Naive thymus-derived CD4-positive, alpha-beta T cell (primary cell): ENCODE measurements at regions of chr2 and their contacts with region 1.

Region 1: DNA sequence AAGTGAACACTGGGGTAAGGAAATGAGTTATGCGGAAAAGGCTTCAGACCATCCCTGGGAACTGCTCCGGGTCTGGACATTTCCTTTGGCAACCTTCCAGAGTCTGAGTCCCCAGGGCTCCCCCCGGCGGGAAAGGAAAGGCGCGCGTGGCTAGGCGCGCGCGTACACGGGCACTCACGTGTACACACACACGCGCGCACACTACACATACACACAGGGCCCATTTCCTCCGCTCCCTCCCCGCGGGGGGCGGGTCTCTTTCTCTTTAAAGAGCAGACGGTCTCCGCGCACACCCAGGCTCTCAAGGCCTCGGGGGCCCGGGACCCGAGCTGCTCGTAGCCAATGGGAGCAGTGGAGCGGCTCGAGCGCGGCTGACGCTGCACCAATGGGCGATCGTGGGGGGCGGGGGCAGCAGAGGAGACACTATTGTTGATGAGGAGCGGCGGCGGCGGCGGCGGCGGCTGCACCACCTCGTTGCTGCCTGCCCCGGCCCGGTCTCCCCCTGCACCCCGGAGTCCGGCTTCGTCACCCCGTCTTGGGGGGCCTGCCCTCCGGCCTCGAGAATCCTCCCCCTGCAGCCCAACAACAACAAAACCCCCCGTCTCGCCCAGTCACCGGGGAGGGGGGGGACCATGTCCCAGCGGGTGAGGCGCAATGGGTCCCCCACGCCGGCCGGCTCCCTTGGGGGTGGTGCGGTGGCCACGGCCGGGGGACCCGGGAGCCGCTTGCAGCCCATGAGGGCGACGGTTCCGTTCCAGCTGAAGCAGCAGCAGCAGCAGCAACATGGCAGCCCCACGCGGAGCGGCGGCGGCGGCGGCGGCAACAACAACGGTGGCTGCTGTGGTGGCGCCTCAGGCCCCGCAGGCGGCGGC is at the start of gene FAM117B:
- DNase-seq: peak; percentile 90 to 99 (median 98)
- ATAC-seq: peak; percentile 93
- H3K4me3 ChIP-seq: peak within 1 kb of the TSS; percentile 81
- H3K4me3 Mint-ChIP-seq: peak within 1 kb of the TSS in 9 of 10 donors; percentile 93 to 98 (median 97)
- H3K27ac ChIP-seq: peak within 1 kb of the TSS; percentile 81
- H3K27ac Mint-ChIP-seq: peak within 1 kb of the TSS; percentile 92 to 99 (median 96)
- H3K4me1 ChIP-seq: peaks cover 22 to 29% of the 10 kb centered on the region in 2 donors
- H3K4me1 Mint-ChIP-seq: peaks cover 27 to 66% (median 61%) of the 10 kb centered on the region in 7 donors
- H3K27me3 ChIP-seq: no peaks in the 10 kb centered on the region
- H3K27me3 Mint-ChIP-seq: no peaks in the 10 kb centered on the region
- total RNA-seq, gene FAM117B: 12.8 to 57.9 (median 48.8) TPM

Region 2: DNA sequence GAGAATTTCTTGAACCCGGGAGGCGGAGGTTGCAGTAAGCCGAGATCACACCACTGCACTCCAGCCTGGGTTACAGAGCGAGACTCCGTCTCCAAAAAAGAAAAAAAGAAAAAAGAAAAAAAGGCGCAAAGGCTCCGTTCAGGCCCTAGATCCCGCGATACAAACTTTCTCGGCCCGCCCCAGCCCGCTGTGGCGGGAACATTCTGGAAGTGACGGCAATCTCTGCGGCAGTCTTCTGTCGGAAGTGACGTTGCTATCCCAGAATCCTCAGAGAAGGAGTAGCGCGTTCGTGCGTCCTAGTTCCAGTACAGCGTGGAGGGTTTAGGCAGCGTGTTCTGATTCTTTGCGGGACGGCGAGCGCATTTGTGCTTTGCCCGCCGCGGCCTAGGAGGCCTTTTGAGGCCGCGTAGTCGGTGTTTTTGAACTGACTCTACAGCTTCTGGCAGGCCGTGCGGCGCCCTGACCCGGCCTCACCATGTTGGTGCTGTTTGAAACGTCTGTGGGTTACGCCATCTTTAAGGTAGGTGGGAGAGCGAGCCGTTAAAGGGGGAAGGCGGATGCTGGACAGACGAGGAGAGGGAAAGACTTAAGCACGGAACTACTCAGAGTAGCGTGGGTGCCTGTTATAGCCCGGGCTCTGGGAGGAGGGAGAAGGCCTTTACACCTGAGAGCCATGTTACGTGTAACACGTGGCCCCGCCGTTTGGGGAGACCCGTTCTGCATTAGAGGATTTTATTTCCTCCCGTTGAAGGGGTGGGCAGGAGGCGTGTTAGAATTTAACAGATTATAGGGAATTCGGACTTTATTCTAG is 369.1 kb before region 1 on chr2 and contains the start of gene NOP58:
- CTCF ChIA-PET with region 1: no interaction called
- POLR2A ChIA-PET with region 1: interaction called, 3 read pairs
- intact Hi-C with region 1: loop called in 1 of 2 experiments (anchors 1 kb)
- DNase-seq: peak; percentile 69 to 96 (median 93)
- ATAC-seq: peak; percentile 90
- H3K4me3 ChIP-seq: peak within 1 kb of the TSS; percentile 93
- H3K4me3 Mint-ChIP-seq: peak within 1 kb of the TSS in 9 of 10 donors; percentile 53 to 71 (median 64)
- H3K27ac ChIP-seq: peak within 1 kb of the TSS; percentile 92
- H3K27ac Mint-ChIP-seq: peak within 1 kb of the TSS in 6 of 9 donors; percentile 4 to 83 (median 76)
- H3K4me1 ChIP-seq: peaks cover 17 to 34% of the 10 kb centered on the region in 2 donors
- H3K4me1 Mint-ChIP-seq: peaks cover 11 to 27% (median 21%) of the 10 kb centered on the region in 7 donors
- H3K27me3 ChIP-seq: no peaks in the 10 kb centered on the region
- H3K27me3 Mint-ChIP-seq: no peaks in the 10 kb centered on the region
- total RNA-seq, gene NOP58: 105 to 259 (median 110) TPM

Region 3: DNA sequence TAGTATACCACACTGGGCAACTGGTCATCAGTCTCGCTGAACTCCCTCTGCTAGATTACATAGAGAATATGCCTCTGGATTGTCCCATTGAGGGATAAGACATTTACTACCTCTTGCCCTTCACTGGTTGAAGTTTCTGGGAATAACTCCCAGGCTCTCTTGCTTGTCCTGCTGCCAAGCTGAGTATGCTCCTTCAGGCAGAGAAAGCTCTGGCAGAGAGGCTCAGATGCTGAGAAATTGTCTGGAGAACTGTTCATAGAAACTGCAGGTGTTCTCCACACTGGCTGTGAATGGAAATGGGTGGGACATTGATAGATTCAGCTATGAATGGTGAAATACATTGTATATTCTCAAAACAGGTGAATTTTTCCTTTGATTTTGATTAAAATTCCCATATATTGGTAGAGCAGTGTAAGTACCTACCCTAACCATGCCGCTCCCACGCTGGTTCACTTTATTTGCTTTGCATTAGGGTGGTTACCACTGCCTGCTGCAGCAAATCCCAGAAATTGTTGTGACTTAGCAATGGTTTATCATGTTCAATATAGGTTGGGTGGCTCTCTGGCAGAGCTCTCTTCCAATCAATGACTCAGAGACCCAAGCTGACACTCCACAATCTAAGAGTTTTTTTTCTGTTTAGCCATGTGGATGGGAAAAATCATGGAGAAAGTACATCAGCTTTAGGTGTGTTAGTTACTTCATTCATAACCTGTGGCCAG is 36.7 kb after region 1 on chr2:
- CTCF ChIA-PET with region 1: interaction called, 3 read pairs
- POLR2A ChIA-PET with region 1: interaction called, 108 read pairs
- intact Hi-C with region 1: loop called (anchors 1 to 2 kb)
- DNase-seq: no peak
- ATAC-seq: no peak
- H3K4me3 ChIP-seq: no peak overlapping the region
- H3K4me3 Mint-ChIP-seq: peak overlapping the region in 6 of 10 donors; percentile 9 to 81 (median 70)
- H3K27ac ChIP-seq: no peak overlapping the region
- H3K27ac Mint-ChIP-seq: peak overlapping the region in 5 of 9 donors; percentile 59 to 91 (median 84)
- H3K4me1 ChIP-seq: peaks cover 0 to 57% of the 10 kb centered on the region in 2 donors
- H3K4me1 Mint-ChIP-seq: peaks cover 42 to 93% (median 80%) of the 10 kb centered on the region in 7 donors
- H3K27me3 ChIP-seq: no peaks in the 10 kb centered on the region
- H3K27me3 Mint-ChIP-seq: no peaks in the 10 kb centered on the region

Region 4: DNA sequence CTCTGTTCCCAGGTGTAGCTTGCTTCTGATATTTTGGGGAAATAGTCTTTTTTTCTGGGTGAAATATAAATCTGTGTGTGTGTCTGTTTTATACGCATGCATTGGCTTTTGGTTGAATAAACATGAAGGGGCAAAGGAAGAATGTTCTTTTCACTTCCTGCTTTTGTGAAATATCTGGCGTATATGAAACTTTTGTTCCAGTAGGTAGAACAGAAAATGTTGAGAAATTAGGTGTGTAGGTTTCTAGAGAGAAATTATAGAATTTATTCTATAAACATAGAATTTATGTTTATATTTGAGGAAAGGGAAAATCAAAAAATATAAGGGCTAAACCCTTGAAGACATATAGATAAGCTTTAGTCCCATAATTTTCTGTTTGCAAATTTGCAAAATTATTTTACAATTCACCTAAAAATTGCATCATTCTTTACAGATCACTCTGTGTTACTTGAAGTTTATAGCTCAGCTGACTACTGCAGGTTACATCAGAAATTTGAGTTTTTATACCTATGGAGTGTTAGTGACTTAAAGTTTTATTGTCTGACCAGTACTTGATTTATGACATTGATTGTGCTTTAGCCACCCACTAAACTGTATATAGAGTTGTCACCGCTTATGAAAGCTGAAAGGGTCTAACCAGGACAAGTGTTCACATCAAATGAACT is 116.1 kb after region 1 on chr2:
- CTCF ChIA-PET with region 1: no interaction called
- POLR2A ChIA-PET with region 1: interaction called, 26 read pairs
- intact Hi-C with region 1: loop called in 1 of 2 experiments (anchors 2 kb)
- DNase-seq: peak in 5 of 9 donors; percentile 14 to 40 (median 22)
- ATAC-seq: no peak
- H3K4me3 ChIP-seq: no peak overlapping the region
- H3K4me3 Mint-ChIP-seq: peak overlapping the region in 9 of 10 donors; percentile 18 to 80 (median 67)
- H3K27ac ChIP-seq: peak overlapping the region; percentile 52
- H3K27ac Mint-ChIP-seq: peak overlapping the region in 8 of 9 donors; percentile 18 to 97 (median 88)
- H3K4me1 ChIP-seq: peaks cover 0 to 17% of the 10 kb centered on the region in 2 donors
- H3K4me1 Mint-ChIP-seq: peaks cover 8 to 90% (median 80%) of the 10 kb centered on the region in 7 donors
- H3K27me3 ChIP-seq: no peaks in the 10 kb centered on the region
- H3K27me3 Mint-ChIP-seq: no peaks in the 10 kb centered on the region

Region 5: DNA sequence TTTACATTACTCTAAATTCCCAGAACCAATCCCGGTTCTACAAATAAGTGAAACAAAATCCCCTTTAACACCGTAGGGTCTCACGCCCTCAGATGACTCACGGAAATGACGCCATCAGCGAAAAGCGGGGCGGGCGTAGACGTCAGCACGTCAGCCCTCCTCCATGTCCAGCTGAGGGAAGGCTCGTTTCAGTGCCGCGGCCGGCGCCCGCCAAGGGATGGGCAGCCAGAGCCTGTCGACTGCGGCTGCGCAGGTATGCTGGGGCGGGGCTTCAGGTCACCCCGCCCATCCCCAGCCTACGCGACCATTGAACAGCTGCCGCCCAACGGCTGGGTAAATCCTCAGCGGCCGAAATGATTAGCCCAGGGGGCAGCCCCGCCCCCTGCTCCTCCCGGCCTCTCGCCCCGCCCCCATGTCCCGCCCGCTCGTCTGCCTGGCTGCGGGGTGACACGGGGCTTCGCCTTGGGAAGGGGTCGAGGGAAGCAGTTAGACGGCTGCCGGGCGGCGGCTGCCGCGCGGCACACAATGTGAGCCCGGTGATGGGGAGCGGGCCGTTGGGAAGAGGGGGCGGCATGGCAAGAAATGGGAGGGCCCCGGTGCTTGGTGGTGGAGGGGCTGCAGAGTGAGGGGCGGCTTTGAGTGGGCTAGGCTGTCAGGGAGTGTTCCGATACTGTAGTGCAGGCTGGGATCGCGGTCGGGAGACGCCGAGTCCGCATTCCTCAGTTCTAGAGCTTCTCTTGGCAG is 379.8 kb after region 1 on chr2 and contains the start of gene NBEAL1:
- CTCF ChIA-PET with region 1: no interaction called
- POLR2A ChIA-PET with region 1: no interaction called
- intact Hi-C with region 1: loop called (anchors 1 kb)
- DNase-seq: peak; percentile 88 to 99 (median 90)
- ATAC-seq: peak; percentile 95
- H3K4me3 ChIP-seq: peak within 1 kb of the TSS; percentile 92
- H3K4me3 Mint-ChIP-seq: peak within 1 kb of the TSS; percentile 90 to 97 (median 95)
- H3K27ac ChIP-seq: peak within 1 kb of the TSS; percentile 92
- H3K27ac Mint-ChIP-seq: peak within 1 kb of the TSS; percentile 84 to 98 (median 94)
- H3K4me1 ChIP-seq: peaks cover 5 to 14% of the 10 kb centered on the region in 2 donors
- H3K4me1 Mint-ChIP-seq: peaks cover 18 to 48% (median 41%) of the 10 kb centered on the region in 7 donors
- H3K27me3 ChIP-seq: no peaks in the 10 kb centered on the region
- H3K27me3 Mint-ChIP-seq: peaks cover 0 to 19% (median 0%) of the 10 kb centered on the region in 5 donors
- total RNA-seq, gene NBEAL1: 11.6 to 15.9 (median 12.6) TPM